Activated naive CD4-positive, alpha-beta T cell treated with anti-CD3 and anti-CD28 coated beads for 36 hours (primary cell): ENCODE measurements at regions of chr19 and their contacts with region 1.

Region 1: DNA sequence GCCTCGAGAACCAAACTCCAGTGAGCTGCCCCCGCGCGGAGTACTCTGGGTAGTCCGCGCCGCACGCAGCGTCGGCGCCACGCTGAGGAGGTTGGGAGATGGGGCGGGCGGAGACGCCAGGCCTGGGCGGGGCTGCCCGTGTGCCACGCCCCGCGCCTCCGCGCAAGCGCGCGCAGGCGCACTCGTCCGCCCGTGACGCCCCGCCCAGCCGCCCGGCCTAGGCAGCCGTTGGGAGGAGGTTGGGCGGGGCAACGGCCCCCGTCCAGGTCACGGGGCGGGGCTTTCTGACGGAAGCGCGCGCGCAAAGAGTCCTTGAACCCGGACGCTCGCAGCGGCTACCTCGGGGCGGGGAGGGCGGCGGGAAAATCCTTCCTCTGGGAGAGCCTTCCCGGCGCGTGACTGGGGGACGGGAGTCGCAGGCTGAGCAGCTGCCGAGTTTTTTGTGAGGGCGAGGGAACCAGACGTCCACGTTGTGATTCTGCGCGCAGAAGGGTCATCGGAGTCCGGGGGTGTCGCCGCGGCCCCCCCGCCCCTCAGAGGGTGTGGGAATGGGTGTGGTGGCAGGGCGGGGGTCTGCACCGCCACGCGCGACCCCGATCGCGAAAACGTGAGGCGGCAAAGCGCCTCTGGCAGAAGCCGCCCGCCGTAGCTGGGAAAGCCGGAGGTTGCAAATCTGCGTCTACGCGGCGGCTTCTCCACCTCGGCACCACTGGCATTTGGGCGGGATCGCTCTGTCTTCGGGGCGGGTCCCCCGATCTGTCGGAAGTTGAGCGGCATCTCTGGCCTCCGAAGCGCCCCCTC is at the start of gene MED26:
- DNase-seq: peak; percentile 96
- H3K4me3 Mint-ChIP-seq: peak within 1 kb of the TSS; percentile 99
- H3K27ac Mint-ChIP-seq: peak within 1 kb of the TSS; percentile 99
- H3K4me1 Mint-ChIP-seq: peaks cover 46% of the 10 kb centered on the region
- H3K27me3 Mint-ChIP-seq: no peaks in the 10 kb centered on the region
- total RNA-seq, gene MED26: 11.3 to 11.9 TPM

Region 2: GRCh38 chr19:16495982-16496612 is 132.3 kb before region 1 on chr19 and contains the starts of genes C19orf44 and CALR3:
- CTCF ChIA-PET with region 1: no interaction called
- intact Hi-C with region 1: loop called (anchors 1 kb)
- DNase-seq: peak; percentile 98
- H3K4me3 Mint-ChIP-seq: peak within 1 kb of the TSS; percentile 95
- H3K27ac Mint-ChIP-seq: peak within 1 kb of the TSS; percentile 64
- H3K4me1 Mint-ChIP-seq: peaks cover 15% of the 10 kb centered on the region
- H3K27me3 Mint-ChIP-seq: no peaks in the 10 kb centered on the region
- total RNA-seq, gene C19orf44: 2.1 to 2.6 TPM
- total RNA-seq, gene CALR3: not detected

Region 3: DNA sequence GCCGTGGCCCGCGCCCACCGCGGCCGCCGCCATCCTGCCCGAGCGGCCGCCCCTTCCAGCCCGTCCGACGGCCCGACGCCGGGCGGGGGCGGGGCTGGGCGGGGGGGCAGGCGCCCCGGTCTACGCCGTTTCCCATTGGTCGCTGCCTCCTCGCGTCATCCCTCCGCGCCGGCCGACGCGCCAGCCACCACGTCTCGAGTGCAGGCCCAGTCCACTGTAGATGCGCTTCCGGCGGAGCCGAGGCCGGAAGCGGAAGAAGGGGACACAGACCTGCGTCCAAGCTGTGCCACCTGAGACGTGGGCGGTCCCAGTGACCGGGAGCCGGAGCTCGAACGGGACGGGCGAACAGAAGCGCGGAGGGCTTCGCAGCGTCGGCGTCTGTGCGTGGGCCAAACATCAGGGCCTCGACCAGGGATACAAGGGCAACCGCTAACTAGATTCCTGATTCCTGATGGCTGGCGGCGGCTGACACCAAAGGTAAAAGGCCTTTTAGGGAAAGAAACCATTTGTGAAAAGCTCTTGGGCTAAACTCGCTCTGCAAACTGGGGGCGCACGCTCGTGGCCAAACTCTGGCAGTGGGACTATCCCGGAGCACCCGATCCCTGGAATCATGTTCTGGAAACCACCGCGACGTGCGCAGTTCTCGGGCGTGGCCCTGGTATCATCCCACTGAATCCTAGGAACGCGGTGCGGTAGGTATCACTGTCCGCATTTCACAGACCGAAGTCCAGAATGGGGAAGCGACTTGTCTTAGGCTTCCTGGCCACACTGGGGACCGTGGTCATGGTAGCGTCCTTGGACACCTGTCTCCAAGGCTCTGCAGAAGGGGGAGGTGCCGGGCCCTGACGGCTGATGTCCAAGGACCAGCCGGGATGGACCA is 55.8 kb before region 1 on chr19 and contains the start of gene SLC35E1:
- CTCF ChIA-PET with region 1: no interaction called
- intact Hi-C with region 1: loop called (anchors 1 kb)
- DNase-seq: peak; percentile 93
- H3K4me3 Mint-ChIP-seq: peak within 1 kb of the TSS; percentile 93
- H3K27ac Mint-ChIP-seq: peak within 1 kb of the TSS; percentile 91
- H3K4me1 Mint-ChIP-seq: peaks cover 54% of the 10 kb centered on the region
- H3K27me3 Mint-ChIP-seq: no peaks in the 10 kb centered on the region
- total RNA-seq, gene SLC35E1: 21.7 to 22.1 TPM

Region 4: DNA sequence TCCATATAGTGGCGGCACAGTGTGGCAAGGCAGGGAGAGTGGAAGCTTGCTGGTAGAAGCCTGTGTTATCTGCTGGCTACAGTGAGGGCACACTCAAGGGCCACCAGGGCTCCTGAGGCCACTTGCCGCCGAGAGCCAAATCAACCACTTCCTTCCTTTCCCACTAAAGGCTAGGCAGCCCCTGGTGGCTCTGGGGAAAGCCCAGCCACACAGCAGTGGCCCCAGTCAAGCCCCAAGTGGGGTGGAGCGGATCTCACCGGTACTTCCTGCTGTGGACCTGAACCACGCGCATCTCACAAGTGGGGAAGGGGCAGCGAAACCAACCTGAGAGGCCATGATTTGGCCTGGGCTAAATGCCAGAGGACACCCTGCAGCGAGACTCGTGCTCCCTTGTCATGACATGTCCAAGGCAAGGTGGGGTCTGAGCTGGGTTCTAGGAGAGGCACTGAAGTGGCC is 34.2 kb before region 1 on chr19:
- CTCF ChIA-PET with region 1: no interaction called
- intact Hi-C with region 1: loop called (anchors 1 kb)
- DNase-seq: peak; percentile 71
- H3K4me3 Mint-ChIP-seq: peak overlapping the region; percentile 40
- H3K27ac Mint-ChIP-seq: peak overlapping the region; percentile 37
- H3K4me1 Mint-ChIP-seq: peaks cover 61% of the 10 kb centered on the region
- H3K27me3 Mint-ChIP-seq: no peaks in the 10 kb centered on the region